ENCODE measurements at regions of chr9 and their contacts with region 1.

Region 1: DNA sequence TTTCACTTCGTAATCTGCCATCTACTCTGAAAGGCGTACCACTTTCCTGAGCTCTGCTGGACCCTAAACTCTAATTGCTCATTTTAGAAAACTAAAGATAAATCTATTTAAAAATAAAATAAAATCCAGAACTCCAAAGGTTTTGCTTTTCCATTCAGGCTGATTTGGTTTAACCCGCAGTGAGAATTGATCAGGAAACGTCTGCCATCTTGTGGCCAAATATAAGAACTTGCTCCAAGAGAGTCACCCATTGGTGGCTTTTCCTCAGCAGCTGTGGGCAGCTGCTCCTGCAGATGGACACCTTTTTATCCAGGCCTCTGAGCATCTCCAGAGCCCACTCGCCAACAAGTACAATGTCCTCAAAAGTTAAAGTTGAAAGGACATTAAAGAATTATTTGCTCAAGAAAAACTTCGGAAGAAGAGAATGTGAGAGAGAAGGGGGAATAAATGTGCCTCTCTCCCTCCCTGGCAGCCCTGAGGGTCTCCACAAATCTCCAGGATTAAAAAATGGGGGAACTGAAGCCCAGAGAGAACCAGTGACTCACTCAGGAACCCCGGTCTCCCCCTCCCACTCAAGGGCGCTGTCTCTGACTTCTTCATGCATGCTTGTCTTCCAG is 4.1 kb downstream of the SAXO1 start:
- DNase-seq: no peak
- ATAC-seq: peak; percentile 87
- H3K4me3 ChIP-seq: no peak overlapping the region
- H3K27ac ChIP-seq: no peak overlapping the region
- H3K4me1 ChIP-seq: peaks cover 3% of the 10 kb centered on the region; the same call in 1 of the 2 replicates
- H3K27me3 ChIP-seq: no peaks in the 10 kb centered on the region
- CTCF ChIP-seq: peak; percentile 54 to 79 (median 71); a peak in 5 of 6 replicates
- EP300 ChIP-seq: no peak
- POLR2A ChIP-seq: no peak
- RAD21 ChIP-seq: peak; percentile 88

Region 2: GRCh38 chr9:18255158-18255629 is 773.7 kb before region 1 on chr9:
- CTCF ChIA-PET with region 1: interaction called, 70 read pairs
- POLR2A ChIA-PET with region 1: interaction called, 5 read pairs
- RAD21 ChIA-PET with region 1: interaction called, 38 read pairs
- SMC1A ChIA-PET with region 1: interaction called, 30 read pairs
- in situ Hi-C with region 1: loop called (anchors 5 kb)
- intact Hi-C with region 1: loop called (anchors 1 kb)
- DNase-seq: peak; percentile 9
- ATAC-seq: peak; percentile 96
- H3K4me3 ChIP-seq: no peak overlapping the region
- H3K27ac ChIP-seq: no peak overlapping the region
- H3K4me1 ChIP-seq: no peaks in the 10 kb centered on the region
- H3K27me3 ChIP-seq: no peaks in the 10 kb centered on the region
- CTCF ChIP-seq: peak; percentile 80 to 92 (median 88)
- EP300 ChIP-seq: no peak
- POLR2A ChIP-seq: no peak
- RAD21 ChIP-seq: peak; percentile 96

Region 3: GRCh38 chr9:18442629-18443491 is 586.1 kb before region 1 on chr9:
- CTCF ChIA-PET with region 1: interaction called, 15 read pairs
- POLR2A ChIA-PET with region 1: no interaction called
- RAD21 ChIA-PET with region 1: interaction called, 4 read pairs
- SMC1A ChIA-PET with region 1: interaction called, 6 read pairs
- in situ Hi-C with region 1: no loop called
- intact Hi-C with region 1: loop called (anchors 5 kb)
- DNase-seq: no peak
- ATAC-seq: peak; percentile 98
- H3K4me3 ChIP-seq: no peak overlapping the region
- H3K27ac ChIP-seq: no peak overlapping the region
- H3K4me1 ChIP-seq: no peaks in the 10 kb centered on the region
- H3K27me3 ChIP-seq: no peaks in the 10 kb centered on the region; a peak in 1 of 4 replicates
- CTCF ChIP-seq: peak; percentile 79 to 92 (median 89)
- EP300 ChIP-seq: no peak
- POLR2A ChIP-seq: no peak
- RAD21 ChIP-seq: peak; percentile 74

Region 4: GRCh38 chr9:18824095-18824666 is 204.8 kb before region 1 on chr9:
- CTCF ChIA-PET with region 1: interaction called, 4 read pairs
- POLR2A ChIA-PET with region 1: no interaction called
- RAD21 ChIA-PET with region 1: no interaction called
- SMC1A ChIA-PET with region 1: interaction called, 5 read pairs
- in situ Hi-C with region 1: no loop called
- intact Hi-C with region 1: loop called (anchors 10 kb)
- DNase-seq: no peak
- ATAC-seq: peak; percentile 29; the same call in 1 of the 3 replicates
- H3K4me3 ChIP-seq: no peak overlapping the region
- H3K27ac ChIP-seq: no peak overlapping the region
- H3K4me1 ChIP-seq: no peaks in the 10 kb centered on the region
- H3K27me3 ChIP-seq: no peaks in the 10 kb centered on the region; a peak in 1 of 4 replicates
- CTCF ChIP-seq: peak; percentile 28 to 41 (median 38); a peak in 5 of 6 replicates
- EP300 ChIP-seq: no peak
- POLR2A ChIP-seq: no peak
- RAD21 ChIP-seq: peak; percentile 67

Region 5: DNA sequence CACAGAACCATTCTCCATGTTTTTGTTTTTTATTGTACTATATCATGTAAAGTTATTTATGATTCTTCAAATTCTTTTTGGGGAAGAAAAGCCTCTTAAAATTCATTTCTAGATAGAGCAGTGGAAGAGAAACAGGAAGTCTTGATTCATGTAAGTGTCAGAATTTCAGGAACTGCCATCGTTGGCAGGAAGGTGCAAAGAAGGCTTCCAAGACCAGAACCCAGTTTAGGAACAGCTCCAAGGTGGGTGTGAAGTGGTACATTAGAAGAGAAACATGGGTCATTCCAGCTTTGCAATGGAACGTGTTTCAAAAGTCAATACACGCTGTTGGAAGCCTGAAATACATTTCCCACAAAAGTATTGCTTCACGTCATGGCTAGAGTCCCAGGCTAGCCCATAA is 10.7 kb before region 1 on chr9:
- CTCF ChIA-PET with region 1: interaction called, 13 read pairs
- POLR2A ChIA-PET with region 1: no interaction called
- RAD21 ChIA-PET with region 1: interaction called, 3 read pairs
- SMC1A ChIA-PET with region 1: interaction called, 3 read pairs
- in situ Hi-C with region 1: no loop called
- intact Hi-C with region 1: no loop called
- DNase-seq: no peak
- ATAC-seq: no peak
- H3K4me3 ChIP-seq: no peak overlapping the region
- H3K27ac ChIP-seq: no peak overlapping the region
- H3K4me1 ChIP-seq: no peaks in the 10 kb centered on the region
- H3K27me3 ChIP-seq: no peaks in the 10 kb centered on the region; a peak in 1 of 4 replicates
- CTCF ChIP-seq: no peak
- EP300 ChIP-seq: no peak
- POLR2A ChIP-seq: no peak
- RAD21 ChIP-seq: no peak

Region 6: GRCh38 chr9:19271076-19271475 is 242.1 kb after region 1 on chr9:
- CTCF ChIA-PET with region 1: no interaction called
- POLR2A ChIA-PET with region 1: no interaction called
- RAD21 ChIA-PET with region 1: no interaction called
- SMC1A ChIA-PET with region 1: no interaction called
- in situ Hi-C with region 1: no loop called
- intact Hi-C with region 1: no loop called
- DNase-seq: no peak
- ATAC-seq: no peak
- H3K4me3 ChIP-seq: no peak overlapping the region
- H3K27ac ChIP-seq: no peak overlapping the region
- H3K4me1 ChIP-seq: no peaks in the 10 kb centered on the region; the same call in 1 of the 2 replicates
- H3K27me3 ChIP-seq: no peaks in the 10 kb centered on the region
- CTCF ChIP-seq: no peak
- EP300 ChIP-seq: no peak
- POLR2A ChIP-seq: no peak
- RAD21 ChIP-seq: no peak

Region 7: DNA sequence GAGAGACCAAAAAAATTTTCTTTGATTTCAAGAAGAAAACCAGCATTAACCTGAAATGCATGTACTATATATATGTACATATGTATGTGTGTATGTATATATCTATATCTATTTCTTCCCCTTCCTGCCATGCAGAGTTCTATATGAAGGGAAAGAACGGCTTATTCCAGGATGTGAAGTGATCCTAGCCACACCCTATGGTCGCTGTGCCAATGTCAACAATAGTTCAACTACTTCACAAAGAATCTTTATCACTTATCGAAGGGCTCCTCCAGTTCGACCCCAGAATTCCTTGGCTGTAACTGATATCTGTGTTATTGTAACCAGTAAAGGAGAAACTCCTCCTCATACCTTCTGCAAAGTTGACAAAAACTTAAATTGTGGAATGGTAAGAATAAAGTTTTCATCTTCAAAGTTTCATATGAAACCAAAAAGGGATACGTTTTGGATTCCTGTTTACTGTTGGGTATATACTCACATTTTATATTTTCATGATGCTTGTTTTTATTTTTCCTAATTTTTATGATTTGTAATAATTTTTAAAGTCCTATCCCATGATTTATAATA is 257.8 kb after region 1 on chr9:
- CTCF ChIA-PET with region 1: no interaction called
- POLR2A ChIA-PET with region 1: no interaction called
- RAD21 ChIA-PET with region 1: no interaction called
- SMC1A ChIA-PET with region 1: no interaction called
- in situ Hi-C with region 1: no loop called
- intact Hi-C with region 1: no loop called
- DNase-seq: no peak
- ATAC-seq: no peak
- H3K4me3 ChIP-seq: no peak overlapping the region
- H3K27ac ChIP-seq: no peak overlapping the region
- H3K4me1 ChIP-seq: no peaks in the 10 kb centered on the region
- H3K27me3 ChIP-seq: no peaks in the 10 kb centered on the region
- CTCF ChIP-seq: no peak
- EP300 ChIP-seq: no peak
- POLR2A ChIP-seq: no peak
- RAD21 ChIP-seq: no peak

Measured in GM12878 (cell line).